Ascending aorta (tissue), 2 donors: ENCODE measurements at regions of chr1 and their contacts with region 1.

Region 1: GRCh38 chr1:111576537-111576936 is 43.1 kb upstream of the RAP1A start:
- DNase-seq: no peak
- H3K4me3 ChIP-seq: no peak overlapping the region
- H3K27ac ChIP-seq: no peak overlapping the region
- H3K4me1 ChIP-seq: peaks cover 0 to 4% of the 10 kb centered on the region in 2 donors
- H3K27me3 ChIP-seq: no peaks in the 10 kb centered on the region
- CTCF ChIP-seq: no peak

Region 2: DNA sequence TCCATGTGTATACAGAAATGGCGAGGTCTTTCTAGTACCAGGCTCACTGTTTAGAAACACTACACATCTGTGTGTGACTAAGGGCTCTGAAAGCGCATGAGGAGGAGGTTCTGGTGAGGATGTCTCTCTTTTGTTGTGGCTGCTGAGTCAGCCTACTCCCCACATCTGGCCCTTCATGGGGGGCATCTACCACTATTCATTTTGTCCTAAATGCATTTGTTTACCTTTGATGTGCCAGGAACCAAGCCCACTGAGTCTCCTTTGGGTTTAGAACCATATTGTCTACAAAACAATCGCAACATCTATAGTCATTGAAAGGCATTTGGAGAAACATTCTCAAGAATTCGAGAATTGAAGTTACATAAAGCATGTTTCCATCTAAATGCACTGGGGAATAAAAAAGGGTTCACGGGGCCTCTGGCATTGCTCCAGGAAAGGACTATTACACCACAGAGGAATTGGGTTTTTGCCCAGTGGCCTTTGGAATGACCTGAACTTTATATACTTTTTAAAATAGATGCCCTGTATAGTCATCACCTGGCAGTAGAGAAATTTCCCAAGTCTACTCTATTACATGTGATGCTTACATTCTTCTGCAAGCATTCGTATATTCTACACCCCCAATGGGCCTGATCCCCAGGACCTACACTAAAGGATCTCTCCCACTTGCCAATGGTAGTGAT is 38.1 kb before region 1 on chr1:
- intact Hi-C with region 1: loop called (anchors 5 kb)
- DNase-seq: no peak
- H3K4me3 ChIP-seq: no peak overlapping the region
- H3K27ac ChIP-seq: no peak overlapping the region
- H3K4me1 ChIP-seq: peaks cover 0 to 21% of the 10 kb centered on the region in 2 donors
- H3K27me3 ChIP-seq: no peaks in the 10 kb centered on the region
- CTCF ChIP-seq: no peak